Caco-2 (cell line): ENCODE measurements at regions of chr1 and their contacts with region 1.

Region 1: GRCh38 chr1:110196917-110197765 is 13.0 kb upstream of the KCNC4 start:
- DNase-seq: peak; percentile 56 to 57
- H3K4me3 ChIP-seq: no peak overlapping the region
- H3K4me3 Mint-ChIP-seq: no peak overlapping the region
- H3K27ac Mint-ChIP-seq: no peak overlapping the region
- H3K4me1 ChIP-seq: no peaks in the 10 kb centered on the region
- H3K4me1 Mint-ChIP-seq: no peaks in the 10 kb centered on the region
- H3K27me3 ChIP-seq: no peaks in the 10 kb centered on the region
- H3K27me3 Mint-ChIP-seq: no peaks in the 10 kb centered on the region
- CTCF ChIP-seq: peak; percentile 68 to 76

Region 2: GRCh38 chr1:110209715-110210603 is 12.8 kb after region 1 on chr1 and contains the start of gene KCNC4:
- CTCF ChIA-PET with region 1: interaction called, 17 read pairs
- POLR2A ChIA-PET with region 1: no interaction called
- intact Hi-C with region 1: no loop called
- DNase-seq: peak; percentile 74
- H3K4me3 ChIP-seq: peak within 1 kb of the TSS; percentile 51
- H3K4me3 Mint-ChIP-seq: peak within 1 kb of the TSS; percentile 85
- H3K27ac Mint-ChIP-seq: no peak within 1 kb of the TSS
- H3K4me1 ChIP-seq: peaks cover 4% of the 10 kb centered on the region; the same call in 1 of the 2 replicates
- H3K4me1 Mint-ChIP-seq: no peaks in the 10 kb centered on the region
- H3K27me3 ChIP-seq: no peaks in the 10 kb centered on the region
- H3K27me3 Mint-ChIP-seq: no peaks in the 10 kb centered on the region
- CTCF ChIP-seq: no peak
- total RNA-seq, gene KCNC4: 5.3 TPM in 2 replicates

Region 3: DNA sequence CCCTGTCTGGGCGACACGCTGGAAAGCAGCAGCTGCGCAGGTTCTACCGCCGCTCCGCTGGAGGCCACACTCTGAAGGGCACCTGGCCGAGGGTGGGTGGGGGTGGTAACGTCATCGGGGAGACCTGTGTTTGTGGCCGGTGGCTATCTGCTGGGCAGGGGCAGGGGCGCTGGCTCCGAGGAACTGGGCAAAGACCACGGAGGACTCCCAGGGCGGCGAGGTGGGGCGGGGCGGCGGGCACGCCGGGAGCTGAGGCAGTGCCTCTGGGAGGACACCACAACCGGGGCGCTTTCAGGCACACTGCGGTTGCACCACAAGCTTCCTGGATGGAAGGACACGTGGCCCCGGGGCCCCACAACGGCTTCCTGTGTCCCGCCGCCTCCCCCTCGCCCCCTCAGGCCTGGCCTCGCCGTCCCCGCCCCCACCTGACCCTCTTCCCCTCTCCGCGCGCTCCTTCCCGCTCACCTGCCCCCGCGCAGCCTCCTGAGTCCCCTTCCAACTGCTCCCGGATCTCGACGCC is 1006.6 kb after region 1 on chr1:
- CTCF ChIA-PET with region 1: no interaction called
- POLR2A ChIA-PET with region 1: no interaction called
- intact Hi-C with region 1: no loop called
- DNase-seq: peak; percentile 80 to 89
- H3K4me3 ChIP-seq: peak overlapping the region; percentile 54
- H3K4me3 Mint-ChIP-seq: peak overlapping the region; percentile 77
- H3K27ac Mint-ChIP-seq: peak overlapping the region; percentile 49
- H3K4me1 ChIP-seq: peaks cover 34% of the 10 kb centered on the region
- H3K4me1 Mint-ChIP-seq: peaks cover 14% of the 10 kb centered on the region
- H3K27me3 ChIP-seq: no peaks in the 10 kb centered on the region
- H3K27me3 Mint-ChIP-seq: no peaks in the 10 kb centered on the region
- CTCF ChIP-seq: no peak